ENCODE measurements at regions of chr10 and their contacts with region 1.

Region 1: GRCh38 chr10:109430043-109430760 is 493.1 kb downstream of the XPNPEP1 start:
- DNase-seq: peak; percentile 52
- H3K4me3 ChIP-seq: no peak overlapping the region
- CTCF ChIP-seq: no peak

Region 2: DNA sequence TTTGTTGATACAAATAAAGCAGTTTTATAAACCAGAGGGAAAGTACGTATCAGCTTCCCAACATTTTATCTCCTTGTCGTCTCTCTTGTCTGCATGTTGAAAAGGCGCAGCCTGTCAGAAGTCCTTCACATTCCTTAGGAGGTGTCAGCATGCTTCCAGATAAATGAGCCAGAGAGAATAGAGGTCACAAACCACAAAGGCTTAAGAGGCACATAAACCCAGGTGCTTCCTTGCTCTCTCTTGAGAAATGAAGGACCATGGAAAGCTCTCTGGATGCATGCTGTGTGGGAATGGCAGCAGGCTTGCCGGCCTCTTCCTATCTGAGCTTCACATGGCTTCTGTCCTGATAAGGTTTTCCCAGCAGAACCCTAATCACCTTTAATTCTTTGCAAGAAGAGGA is 44.6 kb after region 1 on chr10:
- in situ Hi-C with region 1: loop called (anchors 5 kb)
- DNase-seq: no peak
- H3K4me3 ChIP-seq: no peak overlapping the region
- CTCF ChIP-seq: no peak

Region 3: DNA sequence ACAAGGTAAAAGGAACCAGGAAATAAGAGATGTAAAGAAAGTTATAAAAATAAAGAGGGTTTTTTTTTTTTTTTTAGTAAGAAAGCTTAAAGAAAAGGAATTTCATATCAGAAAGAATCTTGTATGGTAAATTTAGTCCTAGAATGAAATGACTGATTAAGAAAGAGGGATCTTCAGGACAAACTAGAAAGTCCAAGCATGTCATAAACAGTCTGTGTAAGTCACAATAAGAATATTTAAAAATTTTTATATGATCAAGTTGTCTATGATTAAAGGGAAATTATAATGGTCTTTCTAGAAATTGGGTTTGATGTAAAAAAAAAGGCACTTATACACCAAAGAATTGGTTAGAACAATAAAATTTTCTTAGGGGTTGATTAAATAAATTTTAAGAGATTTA is 203.6 kb after region 1 on chr10:
- in situ Hi-C with region 1: no loop called
- DNase-seq: no peak
- H3K4me3 ChIP-seq: no peak overlapping the region
- CTCF ChIP-seq: no peak